Aorta (tissue), 5 donors: ENCODE measurements at regions of chr2 and their contacts with region 1.

Region 1: DNA sequence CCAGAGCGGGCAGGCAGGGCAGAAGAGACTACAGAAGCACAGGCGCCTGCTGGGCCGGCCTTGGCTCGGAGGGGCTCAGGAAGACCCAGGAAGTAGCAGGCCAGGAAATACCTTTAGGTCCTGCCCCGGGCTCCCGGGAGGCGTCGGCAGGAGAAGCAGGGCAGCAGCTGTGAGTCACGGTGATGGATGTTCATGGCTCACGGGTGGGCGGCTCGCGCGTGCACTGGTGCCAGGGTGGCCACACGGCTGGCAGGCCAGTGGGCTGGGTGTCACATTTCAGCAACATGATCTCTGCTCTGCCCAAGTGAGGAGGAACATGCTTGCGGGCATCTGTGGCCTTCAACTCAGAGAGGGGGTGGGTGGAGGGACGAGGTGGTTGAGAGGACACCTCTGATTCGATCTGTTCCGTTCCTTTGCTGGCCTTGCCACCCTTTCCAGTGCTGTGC is 139.3 kb downstream of the KLHL29 start:
- DNase-seq: peak; percentile 83 to 91
- ATAC-seq: peak; percentile 75
- H3K4me3 ChIP-seq: no peak overlapping the region
- H3K27ac ChIP-seq: peak overlapping the region; percentile 80 to 86
- H3K4me1 ChIP-seq: no peaks in the 10 kb centered on the region
- H3K27me3 ChIP-seq: no peaks in the 10 kb centered on the region

Region 2: DNA sequence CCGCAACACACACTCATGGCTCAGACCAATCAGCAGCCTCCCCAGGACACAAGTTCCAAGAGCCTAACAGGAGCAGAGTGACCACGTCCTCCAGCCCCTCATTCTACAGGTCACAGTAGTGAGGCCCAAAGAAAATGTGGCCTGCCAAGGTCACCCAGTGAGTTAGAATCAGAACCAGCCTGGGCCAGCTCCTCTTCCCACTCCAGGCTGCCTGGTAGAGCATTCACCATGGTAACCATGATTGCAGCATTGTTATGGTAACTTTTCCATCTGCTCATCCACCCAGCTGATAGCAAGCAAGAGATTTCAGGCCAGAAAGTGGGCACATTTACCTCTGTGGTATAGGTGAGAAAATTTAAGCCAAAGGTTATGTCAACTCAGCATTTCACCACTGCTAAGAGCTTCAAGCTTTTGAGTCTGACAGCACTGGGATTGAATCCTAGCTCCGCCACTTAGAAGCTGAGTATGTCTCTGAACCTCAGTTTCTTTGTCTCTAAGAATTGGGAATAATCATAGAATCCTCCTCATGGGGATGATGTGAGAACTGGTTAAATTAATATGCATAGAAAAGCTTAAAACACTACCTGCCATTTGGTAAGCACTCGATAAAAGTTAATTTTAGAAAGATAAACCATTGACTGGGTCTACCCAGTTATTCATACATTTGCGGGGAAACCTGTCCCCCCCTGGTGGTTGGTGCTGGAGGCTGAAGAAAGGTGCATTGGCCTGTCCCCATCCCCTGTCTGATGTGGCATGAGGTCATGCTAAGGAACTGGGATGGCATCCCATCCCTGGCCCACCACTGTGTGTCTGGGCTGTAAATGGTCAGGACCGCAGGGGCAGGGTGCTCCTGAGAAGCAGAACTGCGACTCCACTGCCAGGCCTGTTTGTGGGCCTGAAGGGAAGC is 42.2 kb after region 1 on chr2:
- intact Hi-C with region 1: loop called (anchors 5 kb)
- DNase-seq: no peak
- ATAC-seq: no peak
- H3K4me3 ChIP-seq: no peak overlapping the region
- H3K27ac ChIP-seq: peak overlapping the region in 1 of 2 donors; percentile 28
- H3K4me1 ChIP-seq: peaks cover 0 to 3% of the 10 kb centered on the region in 2 donors
- H3K27me3 ChIP-seq: no peaks in the 10 kb centered on the region